MCF 10A (cell line): ENCODE measurements at regions of chr1 and their contacts with region 1.

Region 1: GRCh38 chr1:212284744-212285684 is at the start of gene PPP2R5A:
- DNase-seq: peak; percentile 100
- H3K4me3 Mint-ChIP-seq: peak within 1 kb of the TSS; percentile 94
- H3K27ac Mint-ChIP-seq: peak within 1 kb of the TSS; percentile 99
- H3K4me1 Mint-ChIP-seq: peaks cover 29% of the 10 kb centered on the region
- H3K27me3 Mint-ChIP-seq: no peaks in the 10 kb centered on the region
- CTCF ChIP-seq: peak; percentile 20
- total RNA-seq, gene PPP2R5A: 37.5 and 38.6 TPM in 2 replicates

Region 2: GRCh38 chr1:212040629-212041028 is 244.4 kb before region 1 on chr1:
- CTCF ChIA-PET with region 1: interaction called, 42 read pairs
- POLR2A ChIA-PET with region 1: interaction called, 127 read pairs
- intact Hi-C with region 1: no loop called
- DNase-seq: peak; percentile 59
- H3K4me3 Mint-ChIP-seq: peak overlapping the region; percentile 24
- H3K27ac Mint-ChIP-seq: peak overlapping the region; percentile 25
- H3K4me1 Mint-ChIP-seq: peaks cover 57% of the 10 kb centered on the region
- H3K27me3 Mint-ChIP-seq: no peaks in the 10 kb centered on the region
- CTCF ChIP-seq: no peak

Region 3: GRCh38 chr1:212089560-212090163 is 195.4 kb before region 1 on chr1:
- CTCF ChIA-PET with region 1: interaction called, 3 read pairs
- POLR2A ChIA-PET with region 1: interaction called, 15 read pairs
- intact Hi-C with region 1: no loop called
- DNase-seq: no peak
- H3K4me3 Mint-ChIP-seq: no peak overlapping the region
- H3K27ac Mint-ChIP-seq: no peak overlapping the region
- H3K4me1 Mint-ChIP-seq: peaks cover 8% of the 10 kb centered on the region
- H3K27me3 Mint-ChIP-seq: no peaks in the 10 kb centered on the region
- CTCF ChIP-seq: no peak

Region 4: GRCh38 chr1:212256369-212256768 is 28.6 kb before region 1 on chr1:
- CTCF ChIA-PET with region 1: interaction called, 6 read pairs
- POLR2A ChIA-PET with region 1: interaction called, 116 read pairs
- intact Hi-C with region 1: loop called (anchors 2 kb)
- DNase-seq: no peak
- H3K4me3 Mint-ChIP-seq: no peak overlapping the region
- H3K27ac Mint-ChIP-seq: peak overlapping the region; percentile 20
- H3K4me1 Mint-ChIP-seq: peaks cover 34% of the 10 kb centered on the region
- H3K27me3 Mint-ChIP-seq: peaks cover 2% of the 10 kb centered on the region
- CTCF ChIP-seq: no peak

Region 5: DNA sequence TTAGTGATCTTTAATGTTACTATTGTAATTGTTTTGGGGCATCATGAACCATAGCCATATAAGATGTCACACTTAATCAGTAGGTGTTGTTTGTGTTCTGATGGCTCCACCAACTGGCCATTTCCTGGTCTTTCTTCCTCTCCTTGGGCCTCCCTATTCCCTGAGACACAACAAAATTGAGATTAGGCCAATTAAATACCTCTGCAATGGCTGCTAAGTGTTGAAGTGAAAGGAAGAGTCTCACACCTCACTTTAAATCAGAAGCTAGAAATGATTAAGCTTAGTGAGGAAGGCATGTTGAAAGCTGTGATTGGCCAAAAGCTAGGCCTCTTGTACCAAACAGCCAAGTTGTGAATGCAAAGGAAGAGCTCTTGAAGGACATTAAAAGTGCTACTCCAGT is 30.9 kb after region 1 on chr1:
- CTCF ChIA-PET with region 1: interaction called, 63 read pairs
- POLR2A ChIA-PET with region 1: interaction called, 25 read pairs
- intact Hi-C with region 1: no loop called
- DNase-seq: peak; percentile 72
- H3K4me3 Mint-ChIP-seq: no peak overlapping the region
- H3K27ac Mint-ChIP-seq: peak overlapping the region; percentile 60
- H3K4me1 Mint-ChIP-seq: peaks cover 14% of the 10 kb centered on the region
- H3K27me3 Mint-ChIP-seq: no peaks in the 10 kb centered on the region
- CTCF ChIP-seq: peak; percentile 48

Region 6: GRCh38 chr1:212440419-212440818 is 155.4 kb after region 1 on chr1:
- CTCF ChIA-PET with region 1: no interaction called
- POLR2A ChIA-PET with region 1: no interaction called
- intact Hi-C with region 1: loop called (anchors 5 kb)
- DNase-seq: no peak
- H3K4me3 Mint-ChIP-seq: no peak overlapping the region
- H3K27ac Mint-ChIP-seq: no peak overlapping the region
- H3K4me1 Mint-ChIP-seq: peaks cover 20% of the 10 kb centered on the region
- H3K27me3 Mint-ChIP-seq: no peaks in the 10 kb centered on the region
- CTCF ChIP-seq: no peak

Region 7: GRCh38 chr1:212488397-212489283 is 203.6 kb after region 1 on chr1:
- CTCF ChIA-PET with region 1: no interaction called
- POLR2A ChIA-PET with region 1: no interaction called
- intact Hi-C with region 1: no loop called
- DNase-seq: peak; percentile 93
- H3K4me3 Mint-ChIP-seq: no peak overlapping the region
- H3K27ac Mint-ChIP-seq: peak overlapping the region; percentile 97
- H3K4me1 Mint-ChIP-seq: peaks cover 41% of the 10 kb centered on the region
- H3K27me3 Mint-ChIP-seq: no peaks in the 10 kb centered on the region
- CTCF ChIP-seq: no peak